SK-N-SH (cell line): ENCODE measurements at regions of chr10 and their contacts with region 1.

Region 1: DNA sequence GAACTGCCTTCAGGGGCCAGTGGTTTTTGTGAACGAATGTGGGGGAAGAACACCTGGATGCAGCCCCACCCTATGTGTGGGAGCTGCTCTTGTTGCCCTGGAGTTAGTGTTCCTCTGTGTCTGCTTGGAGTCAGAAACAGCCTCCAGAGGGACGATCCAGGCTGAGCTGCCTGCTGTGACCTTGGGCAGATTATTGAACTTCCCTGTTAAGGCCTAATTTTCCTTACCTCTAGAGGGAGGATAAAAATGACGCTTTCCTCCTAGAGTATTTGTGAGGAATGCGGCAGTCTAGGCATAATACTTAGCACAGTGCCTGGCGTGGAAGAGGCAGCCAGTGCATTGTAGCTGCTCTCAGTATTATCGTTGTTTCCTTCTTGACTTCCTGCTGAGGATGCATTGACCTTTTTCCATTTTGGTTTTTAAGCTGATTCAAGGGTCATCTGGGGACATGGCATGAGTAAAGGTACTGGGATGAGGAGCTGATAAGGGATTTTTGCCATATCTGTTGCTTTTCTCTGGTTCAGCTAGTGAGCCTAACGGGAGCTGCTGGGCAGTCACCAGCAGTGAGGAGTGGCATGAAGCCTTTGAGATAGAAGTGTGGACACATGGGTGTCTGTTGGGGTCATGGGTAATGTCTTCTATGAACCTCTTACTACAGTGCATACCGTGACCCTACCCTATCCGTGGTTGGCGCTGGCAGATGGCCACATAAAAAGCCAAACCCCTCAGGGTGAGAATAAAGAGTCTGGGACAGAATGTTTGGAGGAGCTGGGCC is 6.4 kb downstream of the ZFYVE27 start:
- DNase-seq: no peak
- H3K4me3 ChIP-seq: no peak overlapping the region
- H3K27ac ChIP-seq: peak overlapping the region in 1 of 2 experiments; percentile 71; a peak in 2 of 4 replicates
- H3K4me1 ChIP-seq: peaks cover 0 to 34% of the 10 kb centered on the region in 2 experiments; a peak in 2 of 4 replicates
- H3K27me3 ChIP-seq: no peaks in the 10 kb centered on the region
- CTCF ChIP-seq: no peak
- EP300 ChIP-seq: no peak
- RAD21 ChIP-seq: no peak

Region 2: DNA sequence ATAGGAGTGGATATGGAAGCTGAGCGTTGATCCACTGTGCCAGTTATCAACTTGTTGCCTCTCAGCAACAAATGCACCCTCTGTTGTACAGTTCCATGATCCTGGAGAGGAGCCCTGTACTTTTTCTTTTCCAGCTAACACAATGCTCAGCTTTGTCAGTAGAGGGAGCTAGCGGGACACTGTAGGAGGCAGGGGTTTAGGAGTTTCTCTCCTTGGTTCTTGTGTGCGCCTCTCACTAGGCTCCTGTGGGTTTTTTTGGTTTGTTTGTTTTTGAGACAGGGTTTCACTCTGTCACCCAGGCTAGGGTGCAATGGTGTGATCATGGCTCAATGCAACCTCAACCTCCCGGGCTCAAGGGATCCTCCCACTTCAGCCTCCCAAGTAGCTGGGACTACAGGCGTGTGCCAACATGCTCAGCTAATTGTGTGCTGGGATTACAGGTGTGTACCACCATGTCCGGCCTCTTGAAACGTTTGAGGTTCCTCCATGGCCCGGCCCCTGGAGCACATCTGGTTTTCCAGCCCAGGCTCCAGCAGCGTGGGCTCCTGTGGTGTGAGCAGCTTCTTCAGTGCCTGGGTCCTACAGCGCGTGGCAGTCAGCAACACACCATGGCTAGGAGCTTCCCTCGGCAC is 41.8 kb before region 1 on chr10:
- CTCF ChIA-PET with region 1: interaction called, 10 read pairs
- POLR2A ChIA-PET with region 1: no interaction called
- DNase-seq: peak; percentile 78
- H3K4me3 ChIP-seq: no peak overlapping the region; a peak in 1 of 4 replicates
- H3K27ac ChIP-seq: no peak overlapping the region
- H3K4me1 ChIP-seq: no peaks in the 10 kb centered on the region
- H3K27me3 ChIP-seq: no peaks in the 10 kb centered on the region
- CTCF ChIP-seq: peak; percentile 86
- EP300 ChIP-seq: no peak
- RAD21 ChIP-seq: peak; percentile 88

Region 3: GRCh38 chr10:97714048-97714371 is 29.3 kb before region 1 on chr10:
- CTCF ChIA-PET with region 1: interaction called, 17 read pairs
- POLR2A ChIA-PET with region 1: interaction called, 4 read pairs
- DNase-seq: no peak
- H3K4me3 ChIP-seq: peak overlapping the region; percentile 64 to 71
- H3K27ac ChIP-seq: peak overlapping the region; percentile 64 to 84
- H3K4me1 ChIP-seq: peaks cover 19 to 27% of the 10 kb centered on the region in 2 experiments; a peak in 3 of 4 replicates
- H3K27me3 ChIP-seq: no peaks in the 10 kb centered on the region
- CTCF ChIP-seq: peak; percentile 29; the same call in 1 of the 2 replicates
- EP300 ChIP-seq: no peak
- RAD21 ChIP-seq: no peak

Region 4: DNA sequence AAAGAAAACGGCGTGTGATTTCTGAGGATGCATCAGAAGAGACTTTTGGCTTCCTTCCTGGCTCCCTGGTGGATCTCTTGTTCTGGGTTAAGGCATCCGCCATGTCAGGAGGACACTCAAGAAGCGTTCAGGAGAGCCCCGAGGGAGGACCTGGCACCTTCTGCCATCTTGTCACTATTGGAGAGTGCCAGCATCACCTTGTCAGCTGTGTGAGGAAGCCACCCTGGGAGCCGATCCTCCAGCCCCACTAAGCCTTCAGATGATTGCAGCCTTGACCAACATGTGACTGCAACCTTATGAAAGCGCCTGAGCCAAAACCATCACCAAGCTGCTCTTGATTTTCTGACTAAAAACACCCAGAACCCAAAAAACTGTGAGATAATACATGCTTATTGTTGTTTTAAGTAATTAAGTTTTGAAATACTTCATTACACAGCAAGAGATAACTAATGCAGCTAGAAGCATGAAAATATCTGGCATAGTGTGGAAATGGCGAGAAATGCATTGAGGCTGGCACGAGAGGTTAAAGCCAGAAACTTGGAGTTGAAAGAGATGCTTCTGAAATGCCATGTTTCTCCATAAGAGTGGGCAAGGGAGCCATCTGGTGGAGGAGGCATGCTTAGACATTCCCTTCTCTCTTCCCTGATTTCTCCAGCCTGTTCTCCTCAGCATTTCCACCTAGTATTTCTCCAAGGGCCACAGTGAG is 11.9 kb before region 1 on chr10:
- CTCF ChIA-PET with region 1: interaction called, 21 read pairs
- POLR2A ChIA-PET with region 1: no interaction called
- DNase-seq: peak; percentile 70
- H3K4me3 ChIP-seq: peak overlapping the region in 1 of 2 experiments; percentile 10; a peak in 1 of 4 replicates
- H3K27ac ChIP-seq: no peak overlapping the region
- H3K4me1 ChIP-seq: peaks cover 0 to under 1% of the 10 kb centered on the region in 2 experiments; a peak in 1 of 4 replicates
- H3K27me3 ChIP-seq: no peaks in the 10 kb centered on the region
- CTCF ChIP-seq: peak; percentile 88
- EP300 ChIP-seq: no peak
- RAD21 ChIP-seq: peak; percentile 99

Region 5: GRCh38 chr10:97759158-97759887 is 16.0 kb after region 1 on chr10:
- CTCF ChIA-PET with region 1: interaction called, 35 read pairs
- POLR2A ChIA-PET with region 1: no interaction called
- DNase-seq: peak; percentile 94
- H3K4me3 ChIP-seq: no peak overlapping the region; a peak in 1 of 4 replicates
- H3K27ac ChIP-seq: peak overlapping the region in 1 of 2 experiments; percentile 2; a peak in 1 of 4 replicates
- H3K4me1 ChIP-seq: peaks cover 0 to 6% of the 10 kb centered on the region in 2 experiments; a peak in 1 of 4 replicates
- H3K27me3 ChIP-seq: no peaks in the 10 kb centered on the region
- CTCF ChIP-seq: peak; percentile 86
- EP300 ChIP-seq: 0 out of 4 replicates have a peak, but pooled peaks of 1 of the 2 experiments have one; percentile 11
- RAD21 ChIP-seq: peak; percentile 93

Region 6: DNA sequence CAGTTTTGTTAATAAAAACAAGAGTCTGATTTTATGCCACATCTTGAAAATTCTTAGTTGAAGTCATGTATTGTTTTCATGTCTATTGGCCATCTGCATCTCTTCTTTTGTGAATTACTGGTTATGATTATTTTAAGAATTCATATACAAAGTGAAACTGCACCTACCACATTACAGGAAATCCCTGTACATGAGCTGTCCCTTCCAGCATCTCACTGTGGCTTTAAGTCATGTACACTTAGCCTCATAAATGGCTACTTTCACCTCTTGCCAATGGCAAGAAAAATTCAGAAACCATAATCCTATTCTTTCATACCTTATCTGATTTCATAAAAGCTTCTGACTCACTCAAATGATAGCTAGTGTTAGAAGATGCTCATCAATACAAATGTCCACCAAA is 238.5 kb after region 1 on chr10:
- CTCF ChIA-PET with region 1: no interaction called
- POLR2A ChIA-PET with region 1: no interaction called
- DNase-seq: no peak
- H3K4me3 ChIP-seq: no peak overlapping the region
- H3K27ac ChIP-seq: no peak overlapping the region
- H3K4me1 ChIP-seq: no peaks in the 10 kb centered on the region
- H3K27me3 ChIP-seq: no peaks in the 10 kb centered on the region
- CTCF ChIP-seq: no peak
- EP300 ChIP-seq: no peak
- RAD21 ChIP-seq: no peak